BJ (cell line): ENCODE measurements at regions of chr10 and their contacts with region 1.

Region 1: DNA sequence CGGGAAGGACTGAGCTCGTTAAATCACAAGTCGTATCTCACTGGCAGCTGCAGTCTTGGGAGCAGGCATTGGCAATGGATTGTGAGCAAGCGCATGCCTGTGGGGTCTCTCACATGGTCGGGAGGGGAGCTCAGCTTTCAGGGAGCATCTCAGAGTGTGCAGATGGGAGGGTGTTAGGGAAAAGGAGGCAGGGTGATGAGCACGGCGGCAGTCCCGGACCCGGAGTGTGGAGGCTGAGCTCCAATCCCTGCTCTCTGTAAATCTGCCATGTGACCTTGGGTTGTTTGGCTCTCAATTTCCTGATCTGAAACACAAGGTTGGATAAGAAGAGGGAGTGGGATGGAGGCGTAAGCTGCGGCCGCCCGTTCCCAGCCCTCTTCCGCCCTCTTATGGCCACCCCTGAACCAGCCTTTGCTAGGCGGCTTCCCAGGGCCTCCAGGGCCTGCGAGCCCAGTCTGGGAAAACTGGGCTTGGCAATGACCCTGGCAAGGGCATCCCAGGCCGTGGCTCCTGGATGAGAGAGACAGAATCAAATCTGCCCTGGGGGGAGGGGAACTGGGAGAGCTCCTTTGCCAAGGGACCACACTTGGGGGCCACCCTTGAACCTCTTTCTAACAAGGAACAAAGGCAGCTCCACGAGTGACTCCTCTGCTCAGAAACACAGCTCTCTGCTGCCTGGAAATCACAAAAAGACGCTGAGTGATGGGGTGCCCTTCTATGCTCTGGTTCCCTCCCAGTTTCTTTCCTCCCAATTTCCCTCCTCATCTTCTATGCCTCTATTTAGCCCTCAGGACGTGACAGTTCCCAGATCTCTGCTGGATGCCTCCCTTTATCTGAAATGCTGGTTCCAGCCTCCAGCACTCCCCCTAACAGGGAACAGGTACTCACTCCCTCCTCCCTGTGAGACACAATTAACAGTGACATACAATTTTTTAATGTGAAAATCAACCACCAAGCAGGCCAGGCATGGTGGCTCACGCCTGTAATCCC is 41.7 kb upstream of the LOXL4 start:
- DNase-seq: peak; percentile 55
- H3K4me3 ChIP-seq: no peak overlapping the region
- H3K27me3 ChIP-seq: 0 out of 2 replicates have a peak, but pooled peaks cover 1% of the 10 kb centered on the region
- CTCF ChIP-seq: peak; percentile 97

Region 2: DNA sequence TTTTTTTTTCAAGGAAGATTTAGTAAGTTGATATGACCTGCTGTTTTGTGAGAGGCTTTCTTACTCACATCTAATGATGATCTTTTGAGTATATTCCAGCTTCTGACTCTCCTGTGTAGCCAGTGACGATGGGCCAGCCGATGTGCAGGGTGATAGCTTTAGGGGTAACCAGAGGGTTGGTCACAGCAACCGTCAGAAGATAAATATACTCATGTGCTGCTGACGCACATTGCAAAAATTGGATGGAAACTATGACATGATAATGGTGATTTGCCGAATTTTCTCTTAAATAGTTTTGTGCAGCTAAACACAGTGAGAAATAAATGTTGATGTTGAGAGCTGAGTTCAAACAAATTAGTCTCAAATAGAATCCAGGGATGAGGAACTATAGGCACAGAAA is 145.7 kb before region 1 on chr10:
- CTCF ChIA-PET with region 1: interaction called, 79 read pairs
- POLR2A ChIA-PET with region 1: no interaction called
- DNase-seq: no peak
- H3K4me3 ChIP-seq: no peak overlapping the region
- H3K27me3 ChIP-seq: no peaks in the 10 kb centered on the region
- CTCF ChIP-seq: no peak

Region 3: DNA sequence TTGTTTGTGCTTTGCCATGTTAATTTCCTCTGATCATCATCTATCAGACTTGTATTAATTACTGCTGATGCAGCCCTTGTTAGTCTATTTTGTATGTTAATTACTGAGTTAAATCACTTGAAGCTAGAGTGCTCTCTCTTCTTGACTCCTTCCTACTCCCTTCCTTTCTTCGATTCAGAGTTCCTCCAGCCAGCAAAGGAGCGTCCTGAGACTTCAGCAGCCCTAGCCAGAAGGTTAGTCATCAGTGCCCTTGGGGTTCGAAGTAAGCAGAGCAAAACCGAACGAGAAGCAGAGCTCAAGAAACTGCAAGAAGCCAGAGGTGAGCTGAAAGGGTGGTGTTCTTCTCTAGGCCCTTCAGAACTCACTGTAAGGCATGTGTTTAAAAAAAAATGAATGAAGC is 73.8 kb before region 1 on chr10:
- CTCF ChIA-PET with region 1: interaction called, 11 read pairs
- POLR2A ChIA-PET with region 1: no interaction called
- DNase-seq: no peak
- H3K4me3 ChIP-seq: no peak overlapping the region
- H3K27me3 ChIP-seq: no peaks in the 10 kb centered on the region
- CTCF ChIP-seq: no peak

Region 4: DNA sequence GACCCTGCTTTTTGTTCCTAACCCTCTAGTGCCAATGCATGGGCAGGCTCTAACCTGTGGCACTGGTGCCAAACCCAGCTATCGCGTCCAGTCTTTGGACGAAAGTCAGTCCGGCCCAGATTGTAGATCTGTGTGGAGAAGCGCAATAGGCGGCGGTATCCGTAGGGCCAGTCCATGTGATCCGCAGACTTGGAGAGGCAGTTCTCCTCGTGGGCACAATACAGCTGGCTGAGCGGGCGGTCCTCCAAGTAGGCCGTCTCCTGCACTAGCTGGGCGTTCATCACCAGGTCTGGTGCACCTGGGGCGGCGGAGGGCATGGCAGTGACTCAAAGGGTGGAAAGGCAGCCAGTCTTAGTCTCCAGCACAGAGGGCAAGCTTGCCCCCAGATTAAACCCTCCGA is 56.2 kb before region 1 on chr10:
- CTCF ChIA-PET with region 1: interaction called, 12 read pairs
- POLR2A ChIA-PET with region 1: no interaction called
- DNase-seq: no peak
- H3K4me3 ChIP-seq: no peak overlapping the region
- H3K27me3 ChIP-seq: no peaks in the 10 kb centered on the region
- CTCF ChIP-seq: no peak

Region 5: GRCh38 chr10:98269072-98269912 is 40.4 kb before region 1 on chr10:
- CTCF ChIA-PET with region 1: interaction called, 47 read pairs
- POLR2A ChIA-PET with region 1: no interaction called
- DNase-seq: peak; percentile 44
- H3K4me3 ChIP-seq: no peak overlapping the region
- H3K27me3 ChIP-seq: no peaks in the 10 kb centered on the region
- CTCF ChIP-seq: no peak

Region 6: GRCh38 chr10:98295907-98296306 is 13.8 kb before region 1 on chr10:
- CTCF ChIA-PET with region 1: interaction called, 54 read pairs
- POLR2A ChIA-PET with region 1: interaction called, 3 read pairs
- DNase-seq: peak; percentile 50
- H3K4me3 ChIP-seq: no peak overlapping the region
- H3K27me3 ChIP-seq: peaks cover 4% of the 10 kb centered on the region
- CTCF ChIP-seq: no peak

Region 7: GRCh38 chr10:98391578-98391991 is 81.9 kb after region 1 on chr10:
- CTCF ChIA-PET with region 1: interaction called, 48 read pairs
- POLR2A ChIA-PET with region 1: no interaction called
- DNase-seq: no peak
- H3K4me3 ChIP-seq: no peak overlapping the region
- H3K27me3 ChIP-seq: no peaks in the 10 kb centered on the region
- CTCF ChIP-seq: no peak